ENCODE measurements at regions of chrX and their contacts with region 1.

Region 1: GRCh38 chrX:150365051-150365989 is 2.2 kb downstream of the MAMLD1 start:
- DNase-seq: peak; percentile 19 to 78 (median 54)
- ATAC-seq: peak; percentile 30
- H3K4me3 ChIP-seq: peak overlapping the region; percentile 67
- H3K4me3 Mint-ChIP-seq: peak overlapping the region; percentile 91
- H3K27ac ChIP-seq: no peak overlapping the region
- H3K27ac Mint-ChIP-seq: peak overlapping the region; percentile 58
- H3K4me1 ChIP-seq: peaks cover 42% of the 10 kb centered on the region
- H3K4me1 Mint-ChIP-seq: peaks cover 29% of the 10 kb centered on the region
- H3K27me3 ChIP-seq: peaks cover 4 to 14% of the 10 kb centered on the region in 2 experiments
- H3K27me3 Mint-ChIP-seq: peaks cover 19% of the 10 kb centered on the region
- CTCF ChIP-seq: peak; percentile 47

Region 2: GRCh38 chrX:150575416-150575808 is 210.1 kb after region 1 on chrX:
- CTCF ChIA-PET with region 1: interaction called, 4 read pairs
- POLR2A ChIA-PET with region 1: interaction called, 5 read pairs
- intact Hi-C with region 1: loop called in 1 of 2 experiments (anchors 10 kb)
- DNase-seq: peak in 13 of 14 experiments; percentile 9 to 80 (median 37)
- ATAC-seq: peak; percentile 78
- H3K4me3 ChIP-seq: peak overlapping the region; percentile 33
- H3K4me3 Mint-ChIP-seq: peak overlapping the region; percentile 98
- H3K27ac ChIP-seq: peak overlapping the region; percentile 27 to 45
- H3K27ac Mint-ChIP-seq: peak overlapping the region; percentile 95
- H3K4me1 ChIP-seq: peaks cover 48% of the 10 kb centered on the region
- H3K4me1 Mint-ChIP-seq: peaks cover 88% of the 10 kb centered on the region
- H3K27me3 ChIP-seq: no peaks in the 10 kb centered on the region
- H3K27me3 Mint-ChIP-seq: no peaks in the 10 kb centered on the region
- CTCF ChIP-seq: no peak

Measured in CD4-positive, alpha-beta T cell (primary cell).